ENCODE measurements at regions of chr5 and their contacts with region 1.

Region 1: DNA sequence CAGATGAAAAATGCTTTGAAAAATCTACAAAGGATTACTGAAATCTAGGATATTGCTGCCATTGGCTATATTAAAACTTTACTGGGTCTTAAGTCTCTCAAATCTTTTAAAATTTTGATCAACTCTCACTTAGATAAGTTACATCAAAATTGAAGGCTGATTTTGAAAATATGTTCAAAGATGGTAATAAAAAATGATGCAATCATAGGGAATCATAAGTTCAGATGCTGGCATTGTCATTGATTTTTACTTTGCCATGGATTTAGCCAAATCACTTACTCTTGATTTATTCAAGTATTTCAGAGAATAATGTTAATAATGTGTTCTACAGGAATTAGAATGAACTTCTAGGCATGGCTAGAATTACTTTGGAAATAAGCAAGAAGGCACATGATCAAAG is 24.2 kb downstream of the LARS1 start:
- DNase-seq: no peak
- ATAC-seq: no peak
- H3K4me3 ChIP-seq: no peak overlapping the region
- H3K27ac ChIP-seq: no peak overlapping the region
- H3K4me1 ChIP-seq: no peaks in the 10 kb centered on the region
- H3K27me3 ChIP-seq: no peaks in the 10 kb centered on the region
- CTCF ChIP-seq: no peak
- POLR2A ChIP-seq: no peak
- RAD21 ChIP-seq: no peak

Region 2: GRCh38 chr5:145965804-145966203 is 192.5 kb before region 1 on chr5:
- CTCF ChIA-PET with region 1: no interaction called
- POLR2A ChIA-PET with region 1: no interaction called
- dilution Hi-C with region 1: no loop called
- in situ Hi-C with region 1: no loop called
- intact Hi-C with region 1: no loop called
- DNase-seq: no peak
- ATAC-seq: no peak
- H3K4me3 ChIP-seq: no peak overlapping the region
- H3K27ac ChIP-seq: no peak overlapping the region
- H3K4me1 ChIP-seq: no peaks in the 10 kb centered on the region; the same call in 1 of the 2 replicates
- H3K27me3 ChIP-seq: no peaks in the 10 kb centered on the region
- CTCF ChIP-seq: no peak
- POLR2A ChIP-seq: no peak
- RAD21 ChIP-seq: no peak

Region 3: GRCh38 chr5:146111409-146111808 is 46.8 kb before region 1 on chr5:
- CTCF ChIA-PET with region 1: no interaction called
- POLR2A ChIA-PET with region 1: no interaction called
- dilution Hi-C with region 1: no loop called
- in situ Hi-C with region 1: loop called (anchors 10 kb)
- intact Hi-C with region 1: loop called (anchors 5 kb)
- DNase-seq: no peak
- ATAC-seq: no peak
- H3K4me3 ChIP-seq: no peak overlapping the region
- H3K27ac ChIP-seq: no peak overlapping the region
- H3K4me1 ChIP-seq: no peaks in the 10 kb centered on the region
- H3K27me3 ChIP-seq: no peaks in the 10 kb centered on the region
- CTCF ChIP-seq: no peak
- POLR2A ChIP-seq: no peak
- RAD21 ChIP-seq: no peak

Region 4: GRCh38 chr5:146273109-146273508 is 114.9 kb after region 1 on chr5:
- CTCF ChIA-PET with region 1: no interaction called
- POLR2A ChIA-PET with region 1: no interaction called
- dilution Hi-C with region 1: no loop called
- in situ Hi-C with region 1: no loop called
- intact Hi-C with region 1: loop called (anchors 5 kb)
- DNase-seq: no peak
- ATAC-seq: no peak
- H3K4me3 ChIP-seq: no peak overlapping the region
- H3K27ac ChIP-seq: no peak overlapping the region
- H3K4me1 ChIP-seq: no peaks in the 10 kb centered on the region
- H3K27me3 ChIP-seq: no peaks in the 10 kb centered on the region
- CTCF ChIP-seq: no peak
- POLR2A ChIP-seq: no peak
- RAD21 ChIP-seq: no peak

Measured in IMR-90 (cell line).